ENCODE measurements at regions of chr15 and their contacts with region 1.

Region 1: GRCh38 chr15:79184465-79184892 is 93.9 kb upstream of the RASGRF1 start:
- DNase-seq: peak; percentile 51
- ATAC-seq: peak; percentile 76
- H3K4me3 ChIP-seq: no peak overlapping the region
- H3K27ac ChIP-seq: no peak overlapping the region
- H3K4me1 ChIP-seq: peaks cover 8 to 19% of the 10 kb centered on the region in 2 experiments
- H3K27me3 ChIP-seq: no peaks in the 10 kb centered on the region; the same call in 1 of the 2 replicates
- CTCF ChIP-seq: peak; percentile 93 to 98 (median 98)
- POLR2A ChIP-seq: no peak
- RAD21 ChIP-seq: peak; percentile 97

Region 2: DNA sequence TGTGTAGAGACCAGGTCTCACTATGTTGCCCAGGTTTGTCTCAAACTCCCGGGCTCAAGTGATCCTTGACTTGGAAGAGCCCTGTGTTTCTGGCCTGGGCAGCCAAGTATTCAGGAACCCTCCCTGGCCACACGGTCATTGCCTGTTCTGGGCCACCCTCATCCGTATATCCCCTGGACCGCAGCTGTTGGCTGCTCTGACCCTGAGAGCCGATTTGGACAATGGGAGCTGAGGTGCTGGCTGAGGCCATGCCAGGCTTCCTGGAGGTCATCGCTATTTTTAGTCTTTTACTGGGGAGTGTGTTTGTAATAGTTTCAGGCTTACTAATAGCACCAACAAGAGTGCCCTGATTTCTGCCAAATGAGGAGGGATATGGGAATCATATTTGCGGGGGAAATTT is 433.9 kb before region 1 on chr15:
- CTCF ChIA-PET with region 1: interaction called, 3 read pairs
- POLR2A ChIA-PET with region 1: no interaction called
- RAD21 ChIA-PET with region 1: no interaction called
- intact Hi-C with region 1: loop called (anchors 10 kb)
- DNase-seq: no peak
- ATAC-seq: peak; percentile 24
- H3K4me3 ChIP-seq: peak overlapping the region in 1 of 2 experiments; percentile 30; a peak in 1 of 4 replicates
- H3K27ac ChIP-seq: no peak overlapping the region
- H3K4me1 ChIP-seq: peaks cover 0 to 6% of the 10 kb centered on the region in 2 experiments; a peak in 1 of 4 replicates
- H3K27me3 ChIP-seq: no peaks in the 10 kb centered on the region
- CTCF ChIP-seq: no peak
- POLR2A ChIP-seq: no peak
- RAD21 ChIP-seq: no peak

Region 3: DNA sequence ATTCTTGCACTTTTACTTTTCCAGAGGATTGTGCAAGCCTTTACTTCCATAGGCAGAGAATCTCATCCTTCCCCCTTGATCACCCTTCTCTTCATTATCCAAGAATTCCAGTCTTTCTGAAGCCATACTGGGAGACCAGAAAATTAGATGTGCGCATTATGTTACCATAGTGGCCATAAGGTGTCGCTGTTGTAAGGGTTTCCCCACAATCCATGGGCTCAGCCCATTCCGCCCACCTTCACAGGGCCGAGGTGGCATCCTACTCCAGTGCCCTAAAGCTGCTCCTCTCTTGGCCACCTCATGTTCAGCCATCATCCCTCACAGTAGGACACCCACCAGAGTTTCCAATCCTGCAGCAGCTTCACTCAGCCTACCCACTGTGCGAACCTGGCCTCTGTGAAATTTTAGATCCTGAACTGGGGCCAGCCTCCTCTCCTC is 274.7 kb before region 1 on chr15:
- CTCF ChIA-PET with region 1: interaction called, 28 read pairs
- POLR2A ChIA-PET with region 1: no interaction called
- RAD21 ChIA-PET with region 1: interaction called in 1 of 2 experiments, 3 read pairs
- intact Hi-C with region 1: loop called (anchors 1 kb)
- DNase-seq: peak; percentile 10
- ATAC-seq: peak; percentile 88
- H3K4me3 ChIP-seq: no peak overlapping the region
- H3K27ac ChIP-seq: no peak overlapping the region
- H3K4me1 ChIP-seq: no peaks in the 10 kb centered on the region
- H3K27me3 ChIP-seq: no peaks in the 10 kb centered on the region
- CTCF ChIP-seq: peak; percentile 63 to 82 (median 76); a peak in 5 of 6 replicates
- POLR2A ChIP-seq: no peak
- RAD21 ChIP-seq: peak; percentile 78

Region 4: DNA sequence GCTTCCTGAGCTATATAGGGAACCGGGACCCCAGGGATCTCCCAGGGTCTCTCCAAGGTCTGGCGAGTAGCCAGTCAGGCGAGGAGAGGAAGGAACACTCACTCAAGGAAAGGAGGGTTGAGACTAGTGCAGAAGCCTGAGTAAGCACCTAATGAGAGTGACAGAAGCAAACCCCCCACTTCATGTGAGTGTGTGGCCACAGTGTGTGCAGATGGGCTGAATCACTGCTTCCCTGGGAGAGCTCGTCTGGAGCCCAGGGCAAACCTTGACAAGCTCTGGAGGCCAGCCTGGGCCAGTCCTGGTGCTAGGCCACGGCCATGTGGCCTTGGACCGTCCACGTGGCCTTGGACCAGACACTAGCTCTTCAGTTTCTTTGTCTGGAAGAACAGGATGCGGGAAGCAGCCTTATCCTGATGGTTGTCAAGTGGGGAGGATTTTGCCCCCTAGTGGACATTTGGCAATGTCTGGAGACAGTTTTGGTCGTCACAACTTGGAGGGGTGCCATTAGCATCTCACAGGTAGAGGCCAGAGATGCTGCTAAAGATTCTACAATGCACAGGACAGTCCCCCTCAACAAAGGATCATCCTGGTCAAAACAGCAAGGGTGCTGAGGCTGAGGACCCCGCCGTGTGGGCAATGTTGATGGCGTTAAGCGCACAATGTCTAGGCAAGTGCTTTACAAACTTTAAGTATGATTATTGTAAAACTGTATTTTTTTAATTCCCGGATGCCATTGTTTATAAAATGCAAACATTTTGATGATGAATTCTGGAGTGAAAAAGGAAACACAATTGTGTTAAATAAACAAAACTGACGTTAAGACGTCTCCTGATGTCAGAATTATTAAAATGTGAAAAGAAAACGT is 204.8 kb before region 1 on chr15:
- CTCF ChIA-PET with region 1: interaction called, 12 read pairs
- POLR2A ChIA-PET with region 1: no interaction called
- RAD21 ChIA-PET with region 1: no interaction called
- intact Hi-C with region 1: no loop called
- DNase-seq: peak; percentile 81
- ATAC-seq: peak; percentile 94
- H3K4me3 ChIP-seq: no peak overlapping the region
- H3K27ac ChIP-seq: no peak overlapping the region; the same call in 1 of the 2 replicates
- H3K4me1 ChIP-seq: peaks cover 3 to 6% of the 10 kb centered on the region in 2 experiments; a peak in 3 of 4 replicates
- H3K27me3 ChIP-seq: no peaks in the 10 kb centered on the region
- CTCF ChIP-seq: peak; percentile 80 to 85 (median 84)
- POLR2A ChIP-seq: no peak
- RAD21 ChIP-seq: peak; percentile 90

Region 5: DNA sequence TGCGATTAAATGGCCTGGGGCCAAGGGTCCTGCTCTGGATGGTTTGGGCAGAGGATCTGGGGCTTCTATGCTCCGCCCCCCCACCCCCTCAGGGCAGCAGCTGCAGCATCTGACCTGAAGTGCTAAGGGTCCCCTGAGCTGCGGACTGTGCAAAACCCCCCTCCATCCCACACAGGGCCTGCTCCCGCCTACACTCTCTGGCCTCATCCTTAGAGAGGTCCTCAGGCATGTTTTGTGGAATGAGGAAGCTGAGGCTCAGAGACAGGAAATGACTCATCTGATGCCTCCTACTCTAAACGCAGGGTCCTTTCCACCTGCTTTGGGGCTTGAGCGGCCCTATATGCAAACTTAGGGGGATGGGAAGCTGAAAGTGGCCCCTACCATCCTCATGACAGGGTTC is 180.1 kb before region 1 on chr15:
- CTCF ChIA-PET with region 1: interaction called, 24 read pairs
- POLR2A ChIA-PET with region 1: interaction called, 4 read pairs
- RAD21 ChIA-PET with region 1: no interaction called
- intact Hi-C with region 1: no loop called
- DNase-seq: peak; percentile 48
- ATAC-seq: peak; percentile 85
- H3K4me3 ChIP-seq: peak overlapping the region; percentile 24 to 47
- H3K27ac ChIP-seq: peak overlapping the region; percentile 79
- H3K4me1 ChIP-seq: peaks cover 30 to 38% of the 10 kb centered on the region in 2 experiments
- H3K27me3 ChIP-seq: no peaks in the 10 kb centered on the region
- CTCF ChIP-seq: no peak
- POLR2A ChIP-seq: no peak
- RAD21 ChIP-seq: no peak

Region 6: GRCh38 chr15:79028411-79028964 is 156.0 kb before region 1 on chr15:
- CTCF ChIA-PET with region 1: interaction called, 234 read pairs
- POLR2A ChIA-PET with region 1: interaction called, 7 read pairs
- RAD21 ChIA-PET with region 1: interaction called, 11 to 23 read pairs
- intact Hi-C with region 1: loop called (anchors 1 kb)
- DNase-seq: peak; percentile 52
- ATAC-seq: peak; percentile 86
- H3K4me3 ChIP-seq: no peak overlapping the region
- H3K27ac ChIP-seq: no peak overlapping the region
- H3K4me1 ChIP-seq: no peaks in the 10 kb centered on the region
- H3K27me3 ChIP-seq: no peaks in the 10 kb centered on the region
- CTCF ChIP-seq: peak; percentile 86 to 98 (median 93)
- POLR2A ChIP-seq: no peak
- RAD21 ChIP-seq: peak; percentile 90

Region 7: GRCh38 chr15:79168922-79169456 is 15.5 kb before region 1 on chr15:
- CTCF ChIA-PET with region 1: interaction called, 27 read pairs
- POLR2A ChIA-PET with region 1: interaction called, 7 read pairs
- RAD21 ChIA-PET with region 1: interaction called in 1 of 2 experiments, 3 read pairs
- intact Hi-C with region 1: no loop called
- DNase-seq: peak; percentile 61
- ATAC-seq: peak; percentile 85
- H3K4me3 ChIP-seq: no peak overlapping the region
- H3K27ac ChIP-seq: no peak overlapping the region
- H3K4me1 ChIP-seq: peaks cover 25 to 41% of the 10 kb centered on the region in 2 experiments
- H3K27me3 ChIP-seq: no peaks in the 10 kb centered on the region
- CTCF ChIP-seq: peak; percentile 9 to 44 (median 29); a peak in 3 of 6 replicates
- POLR2A ChIP-seq: no peak
- RAD21 ChIP-seq: peak; percentile 47

Measured in HCT116 (cell line).